GM12878 (cell line): ENCODE measurements at regions of chr1 and their contacts with region 1.

Region 1: DNA sequence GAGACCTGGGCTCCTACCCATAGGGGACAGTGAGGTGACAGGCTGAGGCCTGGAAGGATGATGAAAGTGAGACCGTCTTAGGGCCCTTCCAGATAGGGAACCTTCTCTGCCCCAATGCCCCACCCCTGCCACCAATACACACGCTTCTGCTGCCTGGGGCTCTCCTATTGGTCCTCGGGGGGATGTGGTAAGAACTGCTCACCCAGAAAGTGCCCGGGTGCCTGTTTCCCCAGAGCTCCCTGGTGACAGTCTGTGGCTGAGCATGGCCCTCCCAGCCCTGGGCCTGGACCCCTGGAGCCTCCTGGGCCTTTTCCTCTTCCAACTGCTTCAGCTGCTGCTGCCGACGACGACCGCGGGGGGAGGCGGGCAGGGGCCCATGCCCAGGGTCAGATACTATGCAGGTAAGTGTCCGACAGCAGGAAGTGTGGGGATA is 948 bp downstream of the SEMA4A start:
- DNase-seq: peak; percentile 81
- ATAC-seq: peak; percentile 80
- H3K4me3 ChIP-seq: peak overlapping the region; percentile 94
- H3K27ac ChIP-seq: peak overlapping the region; percentile 82
- H3K4me1 ChIP-seq: peaks cover 88% of the 10 kb centered on the region
- H3K27me3 ChIP-seq: no peaks in the 10 kb centered on the region
- CTCF ChIP-seq: peak in 1 of 3 experiments; percentile 9; a peak in 1 of 6 replicates
- EP300 ChIP-seq: no peak
- POLR2A ChIP-seq: peak; percentile 65
- RAD21 ChIP-seq: no peak

Region 2: DNA sequence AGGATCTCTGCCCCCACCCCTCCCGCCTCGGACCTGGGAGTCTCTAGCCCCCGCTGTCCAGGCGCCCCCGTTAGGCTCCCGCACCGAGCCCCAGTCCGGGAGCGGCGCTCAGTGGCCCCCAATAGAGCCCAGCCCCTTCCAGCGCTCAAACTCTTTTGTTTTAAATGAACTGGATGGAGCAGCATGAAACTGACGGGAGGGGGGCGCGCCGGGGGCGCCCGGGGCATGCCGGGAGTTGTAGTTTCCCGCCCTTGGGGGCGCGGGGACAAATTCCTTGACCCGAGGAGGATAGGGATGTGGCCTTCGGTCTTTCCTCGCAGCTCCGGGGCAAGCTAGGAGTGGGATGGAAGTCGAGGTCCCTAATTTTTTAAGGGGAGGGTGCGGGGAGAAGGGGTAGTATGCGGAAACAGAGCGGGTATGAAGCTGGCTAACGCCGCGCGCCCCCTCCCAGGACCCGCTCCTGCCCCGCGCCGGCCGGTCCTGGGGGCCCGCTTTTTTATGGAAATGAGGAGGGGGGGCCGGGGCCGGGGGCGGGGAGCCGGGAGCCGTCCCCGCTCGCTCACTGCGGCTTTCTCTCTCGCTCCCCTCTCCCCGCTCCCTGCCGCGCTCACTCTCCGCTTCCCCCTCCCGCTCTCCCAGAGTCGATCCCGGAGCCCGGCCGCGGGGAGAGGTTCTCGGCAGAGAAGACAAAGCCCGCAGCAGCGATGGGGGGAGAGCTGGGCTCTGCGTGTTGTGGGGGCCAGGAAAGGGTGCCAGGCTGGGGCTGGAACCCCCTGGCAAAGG is 71.8 kb before region 1 on chr1 and contains the start of gene MEX3A:
- CTCF ChIA-PET with region 1: no interaction called
- POLR2A ChIA-PET with region 1: no interaction called
- RAD21 ChIA-PET with region 1: no interaction called
- SMC1A ChIA-PET with region 1: no interaction called
- in situ Hi-C with region 1: no loop called
- intact Hi-C with region 1: no loop called
- DNase-seq: no peak
- ATAC-seq: peak; percentile 89
- H3K4me3 ChIP-seq: peak within 1 kb of the TSS; percentile 95
- H3K27ac ChIP-seq: no peak within 1 kb of the TSS
- H3K4me1 ChIP-seq: no peaks in the 10 kb centered on the region
- H3K27me3 ChIP-seq: peaks cover 0 to 2% of the 10 kb centered on the region in 2 experiments; a peak in 1 of 4 replicates
- CTCF ChIP-seq: no peak
- EP300 ChIP-seq: no peak
- POLR2A ChIP-seq: no peak
- RAD21 ChIP-seq: no peak
- polyA plus RNA-seq, gene MEX3A: 0.11 to 0.27 TPM

Region 3: DNA sequence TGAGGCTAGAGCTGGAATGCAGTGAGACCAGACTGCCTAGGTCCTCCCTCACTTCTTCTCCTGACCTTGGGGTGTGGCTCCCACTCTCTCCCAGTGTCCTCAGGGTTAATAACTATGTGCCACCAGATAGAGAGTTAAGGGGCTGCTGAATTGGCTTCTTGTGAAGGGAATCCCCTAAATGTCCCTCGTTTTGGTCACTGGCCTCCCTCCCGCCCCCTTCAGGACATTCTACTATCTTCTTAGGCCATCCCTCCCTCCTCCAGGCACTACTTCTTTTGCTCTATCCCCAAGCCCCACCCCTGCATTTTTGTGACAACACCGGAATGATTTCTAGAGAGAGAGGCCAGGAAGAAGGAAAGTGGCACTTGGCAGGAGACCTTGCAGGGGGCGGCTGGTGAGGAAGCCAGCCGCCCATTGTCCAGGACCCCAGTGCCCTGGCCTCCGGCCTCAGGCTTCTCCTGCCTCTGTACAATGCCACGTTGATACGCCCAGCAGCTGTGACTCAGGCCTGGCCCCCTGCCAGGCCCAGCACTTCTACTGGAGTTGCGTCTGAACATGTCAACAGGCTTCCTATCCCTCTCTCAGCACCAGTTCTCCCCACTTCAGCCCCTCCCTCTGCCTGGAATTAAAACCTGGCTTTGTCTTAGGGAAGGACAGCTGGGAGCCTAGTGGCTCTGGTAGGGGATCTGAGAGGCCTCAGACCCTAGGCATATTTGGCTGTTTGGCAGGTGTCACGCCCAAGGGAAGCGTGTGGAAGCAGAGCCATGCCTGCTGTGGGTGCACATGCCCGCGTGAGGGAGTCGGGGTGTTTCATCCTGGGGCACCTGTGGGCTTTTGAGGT is 30.8 kb before region 1 on chr1:
- CTCF ChIA-PET with region 1: interaction called, 80 read pairs
- POLR2A ChIA-PET with region 1: interaction called, 10 read pairs
- RAD21 ChIA-PET with region 1: interaction called, 12 read pairs
- SMC1A ChIA-PET with region 1: interaction called, 5 read pairs
- in situ Hi-C with region 1: no loop called
- intact Hi-C with region 1: no loop called
- DNase-seq: peak; percentile 46
- ATAC-seq: peak; percentile 22
- H3K4me3 ChIP-seq: 0 out of 2 replicates have a peak overlapping the region, but pooled peaks have one; percentile 30
- H3K27ac ChIP-seq: peak overlapping the region; percentile 94
- H3K4me1 ChIP-seq: peaks cover 69% of the 10 kb centered on the region
- H3K27me3 ChIP-seq: no peaks in the 10 kb centered on the region
- CTCF ChIP-seq: peak; percentile 25 to 32 (median 29); a peak in 4 of 6 replicates
- EP300 ChIP-seq: no peak
- POLR2A ChIP-seq: no peak
- RAD21 ChIP-seq: 0 out of 2 replicates have a peak, but pooled peaks have one; percentile 4

Region 4: GRCh38 chr1:156193488-156194299 is 39.4 kb after region 1 on chr1 and contains the start of gene SLC25A44:
- CTCF ChIA-PET with region 1: interaction called, 68 read pairs
- POLR2A ChIA-PET with region 1: interaction called, 158 read pairs
- RAD21 ChIA-PET with region 1: interaction called, 139 read pairs
- SMC1A ChIA-PET with region 1: interaction called, 43 read pairs
- in situ Hi-C with region 1: no loop called
- intact Hi-C with region 1: loop called (anchors 2 kb)
- DNase-seq: peak; percentile 100
- ATAC-seq: peak; percentile 96
- H3K4me3 ChIP-seq: peak within 1 kb of the TSS; percentile 100
- H3K27ac ChIP-seq: peak within 1 kb of the TSS; percentile 87
- H3K4me1 ChIP-seq: peaks cover 6% of the 10 kb centered on the region
- H3K27me3 ChIP-seq: no peaks in the 10 kb centered on the region
- CTCF ChIP-seq: peak; percentile 35 to 48 (median 45); a peak in 5 of 6 replicates
- EP300 ChIP-seq: no peak
- POLR2A ChIP-seq: peak; percentile 89
- RAD21 ChIP-seq: no peak
- polyA plus RNA-seq, gene SLC25A44: 7.1 to 9.2 TPM

Region 5: DNA sequence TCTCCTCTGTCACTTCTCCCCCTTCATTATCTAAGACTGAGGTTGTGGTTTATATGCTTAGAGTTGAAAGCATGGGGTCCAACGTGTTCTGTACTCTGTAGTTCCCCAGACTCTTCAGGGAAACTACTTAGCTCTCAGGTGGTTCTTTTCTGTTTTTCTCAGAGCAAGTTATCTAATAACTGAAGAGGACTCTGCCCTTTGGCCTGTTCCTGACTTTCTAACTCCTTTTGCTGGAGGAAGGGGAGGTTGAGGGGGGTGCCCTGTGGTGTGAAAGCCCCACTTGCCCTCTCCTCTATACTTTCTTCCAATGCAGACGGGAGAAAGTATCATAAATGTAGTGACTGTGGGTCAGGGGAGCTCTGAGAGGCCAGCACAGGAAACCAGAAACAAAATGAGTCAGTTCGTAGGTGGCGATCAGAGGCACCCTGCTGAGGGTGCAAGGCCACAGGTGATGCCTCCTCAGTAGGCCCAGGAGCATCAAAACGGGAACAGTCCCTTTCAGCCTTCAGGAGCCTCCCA is 44.6 kb after region 1 on chr1:
- CTCF ChIA-PET with region 1: interaction called, 68 read pairs
- POLR2A ChIA-PET with region 1: interaction called, 158 read pairs
- RAD21 ChIA-PET with region 1: interaction called, 139 read pairs
- SMC1A ChIA-PET with region 1: interaction called, 43 read pairs
- in situ Hi-C with region 1: no loop called
- intact Hi-C with region 1: loop called (anchors 2 kb)
- DNase-seq: peak; percentile 41
- ATAC-seq: peak; percentile 80
- H3K4me3 ChIP-seq: peak overlapping the region; percentile 50; the same call in 1 of the 2 replicates
- H3K27ac ChIP-seq: peak overlapping the region; percentile 69
- H3K4me1 ChIP-seq: peaks cover 11% of the 10 kb centered on the region
- H3K27me3 ChIP-seq: no peaks in the 10 kb centered on the region
- CTCF ChIP-seq: no peak
- EP300 ChIP-seq: peak in 1 of 2 experiments; percentile 21; a peak in 2 of 4 replicates
- POLR2A ChIP-seq: no peak
- RAD21 ChIP-seq: no peak

Region 6: GRCh38 chr1:156212833-156213643 is 58.7 kb after region 1 on chr1 and contains the start of gene PMF1:
- CTCF ChIA-PET with region 1: interaction called, 502 read pairs
- POLR2A ChIA-PET with region 1: interaction called, 21 read pairs
- RAD21 ChIA-PET with region 1: interaction called, 24 read pairs
- SMC1A ChIA-PET with region 1: interaction called, 411 read pairs
- in situ Hi-C with region 1: no loop called
- intact Hi-C with region 1: no loop called
- DNase-seq: peak; percentile 88
- ATAC-seq: peak; percentile 99
- H3K4me3 ChIP-seq: peak within 1 kb of the TSS; percentile 96
- H3K27ac ChIP-seq: peak within 1 kb of the TSS; percentile 99
- H3K4me1 ChIP-seq: peaks cover 10% of the 10 kb centered on the region
- H3K27me3 ChIP-seq: no peaks in the 10 kb centered on the region
- CTCF ChIP-seq: 0 out of 6 replicates have a peak, but pooled peaks of 1 of the 3 experiments have one; percentile 1
- EP300 ChIP-seq: no peak
- POLR2A ChIP-seq: peak; percentile 94
- RAD21 ChIP-seq: no peak
- polyA plus RNA-seq, gene PMF1: 6.7 to 17.6 TPM